SK-MEL-5 (cell line): ENCODE measurements at regions of chr2 and their contacts with region 1.

Region 1: DNA sequence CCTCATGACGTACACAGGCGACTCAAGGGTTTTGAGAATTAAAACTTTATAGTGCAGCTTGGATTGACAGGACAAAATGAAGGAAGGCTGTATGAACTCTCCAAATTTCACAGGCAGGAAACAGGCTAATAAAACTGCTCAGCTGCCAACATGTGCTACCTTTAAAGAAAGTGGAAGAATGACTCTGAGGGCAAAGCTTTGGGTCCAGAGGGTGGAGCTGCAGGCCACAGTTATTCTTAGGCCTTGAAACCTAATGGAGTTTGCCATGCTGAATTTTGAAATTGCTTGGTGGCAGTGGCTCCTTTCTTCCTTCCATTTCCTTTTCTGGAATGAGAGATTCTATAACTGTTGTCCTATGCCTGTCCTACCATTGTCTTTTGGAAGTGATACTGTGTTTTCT is 34.8 kb downstream of the HAT1 start:
- DNase-seq: peak; percentile 77

Region 2: DNA sequence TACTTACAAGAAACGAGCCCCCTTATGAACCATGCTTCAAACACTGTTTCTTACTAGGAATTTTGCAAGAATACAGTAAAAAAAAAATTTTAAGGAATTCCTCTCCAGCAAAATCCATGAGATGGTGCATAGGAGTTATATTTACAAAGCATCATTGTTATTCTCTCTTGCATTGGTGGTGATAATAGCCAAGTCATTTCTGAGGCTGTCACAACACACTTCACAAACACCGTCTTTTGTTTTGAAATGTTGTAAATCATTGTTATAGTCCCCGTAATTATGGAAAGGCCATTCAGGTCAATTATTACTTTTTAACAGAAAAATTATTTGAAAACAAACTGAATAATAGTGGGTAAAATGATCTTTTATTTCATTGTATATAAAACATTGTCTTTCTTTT is 209.7 kb before region 1 on chr2:
- in situ Hi-C with region 1: no loop called
- DNase-seq: no peak

Region 3: GRCh38 chr2:172084734-172085459 is 127.8 kb after region 1 on chr2:
- in situ Hi-C with region 1: loop called (anchors 25 kb)
- DNase-seq: peak; percentile 95

Region 4: GRCh38 chr2:173462892-173463840 is 1506.1 kb after region 1 on chr2:
- in situ Hi-C with region 1: no loop called
- DNase-seq: no peak